ENCODE measurements at regions of chr12 and their contacts with region 1.

Region 1: DNA sequence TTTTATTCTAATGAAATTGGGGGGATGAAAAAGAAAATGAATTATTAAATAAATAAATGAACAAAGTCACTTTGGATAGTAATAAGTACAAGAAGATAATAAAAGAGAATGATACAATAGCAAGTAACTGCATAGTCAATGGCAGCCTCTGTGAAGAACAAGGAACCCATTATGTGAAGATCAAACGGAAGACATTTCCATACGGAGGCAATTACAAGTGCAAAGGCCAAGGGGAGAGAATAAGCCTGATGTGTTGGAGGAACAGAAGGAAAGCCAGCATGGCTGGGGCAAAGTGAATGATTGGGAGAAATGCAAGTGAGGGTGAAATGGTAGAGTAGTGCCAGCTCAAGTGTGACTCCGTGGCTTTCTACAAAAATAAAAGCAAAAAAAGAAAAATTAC is 43.9 kb upstream of the CHPT1 start:
- DNase-seq: no peak
- ATAC-seq: no peak
- H3K4me3 ChIP-seq: no peak overlapping the region
- H3K27ac ChIP-seq: no peak overlapping the region
- H3K4me1 ChIP-seq: no peaks in the 10 kb centered on the region
- H3K27me3 ChIP-seq: no peaks in the 10 kb centered on the region
- CTCF ChIP-seq: no peak

Region 2: GRCh38 chr12:101221301-101221700 is 432.2 kb before region 1 on chr12:
- intact Hi-C with region 1: no loop called
- DNase-seq: no peak
- ATAC-seq: no peak
- H3K4me3 ChIP-seq: no peak overlapping the region
- H3K27ac ChIP-seq: no peak overlapping the region
- H3K4me1 ChIP-seq: no peaks in the 10 kb centered on the region
- H3K27me3 ChIP-seq: no peaks in the 10 kb centered on the region
- CTCF ChIP-seq: no peak

Region 3: GRCh38 chr12:101305226-101305779 is 348.2 kb before region 1 on chr12:
- intact Hi-C with region 1: loop called in 1 of 2 experiments (anchors 10 kb)
- DNase-seq: no peak
- ATAC-seq: peak in 1 of 4 donors; percentile 36
- H3K4me3 ChIP-seq: no peak overlapping the region
- H3K27ac ChIP-seq: no peak overlapping the region
- H3K4me1 ChIP-seq: no peaks in the 10 kb centered on the region
- H3K27me3 ChIP-seq: no peaks in the 10 kb centered on the region
- CTCF ChIP-seq: no peak

Region 4: DNA sequence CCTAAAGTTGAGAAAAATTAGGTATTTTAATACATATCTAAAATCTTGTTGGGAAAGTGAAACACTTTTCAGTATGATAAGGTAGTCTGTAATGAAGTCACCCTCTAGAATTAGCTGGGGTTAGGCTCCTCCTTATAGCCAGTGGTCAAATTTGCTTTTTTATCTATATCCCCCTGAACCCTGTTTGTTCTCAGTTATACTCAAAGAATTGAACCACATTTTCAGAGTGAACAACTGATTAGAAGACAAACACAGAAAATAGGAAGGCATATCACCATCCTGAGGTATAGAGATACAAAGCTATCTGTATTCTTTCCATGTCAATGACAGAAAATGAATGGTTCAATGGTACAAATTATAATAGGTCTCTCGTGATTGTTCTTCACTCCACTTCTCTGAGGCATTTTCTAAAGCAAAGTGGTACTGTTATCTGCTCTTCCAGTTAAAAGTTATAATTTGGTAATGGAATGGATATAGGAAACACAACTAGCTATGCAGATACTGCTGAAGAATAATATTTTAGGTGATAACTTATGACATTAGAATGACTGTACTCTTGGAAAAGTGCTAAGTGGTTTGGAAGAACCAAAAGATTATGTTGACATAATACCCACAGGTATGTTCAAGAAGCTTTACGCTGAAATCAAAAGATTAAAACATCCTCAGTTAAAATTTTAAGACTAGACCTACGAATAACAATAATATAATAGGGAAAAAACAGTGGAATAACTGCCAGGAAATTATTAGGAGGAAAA is 380.7 kb after region 1 on chr12:
- intact Hi-C with region 1: no loop called
- DNase-seq: no peak
- ATAC-seq: no peak
- H3K4me3 ChIP-seq: no peak overlapping the region
- H3K27ac ChIP-seq: no peak overlapping the region
- H3K4me1 ChIP-seq: no peaks in the 10 kb centered on the region
- H3K27me3 ChIP-seq: no peaks in the 10 kb centered on the region
- CTCF ChIP-seq: no peak